ENCODE measurements at regions of chr12 and their contacts with region 1.

Region 1: DNA sequence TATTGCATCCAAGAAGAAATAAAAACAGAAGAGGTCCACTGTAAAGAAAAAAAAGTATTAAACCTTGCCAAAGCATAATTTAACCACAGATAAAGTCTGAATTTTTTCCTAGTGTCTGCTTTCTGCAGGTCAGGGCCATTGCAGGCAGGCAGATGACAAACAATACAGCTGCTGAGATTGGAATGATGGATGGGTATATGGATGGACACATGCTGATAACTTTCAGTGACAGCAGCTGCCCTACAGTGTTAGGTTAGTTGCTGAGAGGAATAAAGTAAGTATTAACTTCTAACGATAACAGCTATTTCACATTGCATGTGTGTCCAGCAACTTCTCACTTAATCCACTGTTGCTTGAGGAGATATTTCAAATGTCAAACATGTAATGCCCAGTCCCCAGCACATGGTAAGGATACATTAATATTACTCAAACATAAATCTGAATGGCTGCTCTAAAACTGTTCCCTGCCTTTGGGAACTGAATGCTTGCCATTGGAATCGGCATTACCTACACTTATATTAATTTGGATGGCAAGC is 515.3 kb downstream of the RMST start:
- DNase-seq: no peak
- H3K4me3 ChIP-seq: no peak overlapping the region
- H3K27ac ChIP-seq: no peak overlapping the region
- H3K4me1 ChIP-seq: no peaks in the 10 kb centered on the region
- H3K27me3 ChIP-seq: no peaks in the 10 kb centered on the region
- CTCF ChIP-seq: no peak
- POLR2A ChIP-seq: no peak

Region 2: DNA sequence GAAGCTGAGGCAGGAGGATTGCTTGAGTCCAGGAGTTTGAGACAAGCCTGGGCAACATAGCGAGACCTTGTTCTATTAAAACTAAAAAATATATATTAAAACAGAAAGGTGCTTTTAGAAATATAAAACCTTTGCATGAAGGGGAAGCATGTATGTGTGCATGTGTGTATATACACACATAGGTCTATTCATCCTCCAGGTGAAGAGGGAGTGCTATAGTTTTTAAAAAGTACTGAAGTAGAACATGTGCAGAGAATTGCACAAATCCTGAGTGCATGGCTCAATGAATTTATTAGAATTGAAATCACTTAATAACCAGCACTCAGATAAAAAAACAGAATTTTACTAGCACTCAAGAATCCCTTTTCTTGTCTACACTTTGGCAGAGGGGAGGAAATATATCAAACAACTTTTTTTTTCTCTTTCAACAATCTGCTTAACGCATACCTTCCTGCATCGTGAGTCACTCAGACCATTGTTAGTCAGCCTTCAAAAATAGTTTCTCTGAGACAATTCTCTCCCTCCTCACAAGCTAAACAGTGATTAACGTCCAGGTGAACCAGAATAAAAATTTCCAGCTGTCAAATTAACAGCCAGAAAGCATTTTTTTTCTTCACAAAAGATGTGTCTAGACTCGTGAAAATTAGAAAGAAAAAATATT is 1088.5 kb before region 1 on chr12:
- intact Hi-C with region 1: no loop called
- DNase-seq: no peak
- H3K4me3 ChIP-seq: no peak overlapping the region
- H3K27ac ChIP-seq: no peak overlapping the region
- H3K4me1 ChIP-seq: peaks cover 8% of the 10 kb centered on the region
- H3K27me3 ChIP-seq: no peaks in the 10 kb centered on the region
- CTCF ChIP-seq: no peak
- POLR2A ChIP-seq: no peak

Region 3: DNA sequence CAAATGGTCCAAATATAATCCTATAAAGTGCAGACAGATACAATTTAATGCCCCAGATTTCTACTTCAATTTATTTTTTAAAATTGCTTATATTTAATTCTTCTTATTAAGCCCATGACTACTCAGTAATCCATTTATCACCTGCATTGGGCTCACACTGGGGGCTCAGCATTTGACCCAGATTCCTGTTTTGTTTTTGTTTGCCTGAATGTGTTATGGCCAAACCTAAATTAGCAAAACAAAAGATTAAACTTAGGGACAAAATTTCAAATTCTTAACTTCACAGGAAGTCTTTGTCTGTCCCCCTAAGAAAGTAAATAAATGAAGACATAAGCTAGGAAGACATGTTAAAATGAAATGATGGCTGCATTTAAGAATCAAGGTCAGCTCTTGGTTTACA is 193.0 kb before region 1 on chr12:
- intact Hi-C with region 1: no loop called
- DNase-seq: no peak
- H3K4me3 ChIP-seq: no peak overlapping the region
- H3K27ac ChIP-seq: no peak overlapping the region
- H3K4me1 ChIP-seq: no peaks in the 10 kb centered on the region
- H3K27me3 ChIP-seq: no peaks in the 10 kb centered on the region
- CTCF ChIP-seq: no peak
- POLR2A ChIP-seq: no peak

Region 4: GRCh38 chr12:97899956-97900355 is 78.0 kb before region 1 on chr12:
- intact Hi-C with region 1: loop called (anchors 2 kb)
- DNase-seq: no peak
- H3K4me3 ChIP-seq: no peak overlapping the region
- H3K27ac ChIP-seq: no peak overlapping the region
- H3K4me1 ChIP-seq: no peaks in the 10 kb centered on the region
- H3K27me3 ChIP-seq: no peaks in the 10 kb centered on the region
- CTCF ChIP-seq: no peak
- POLR2A ChIP-seq: no peak